Activated CD4-positive, alpha-beta T cell treated with anti-CD3 and anti-CD28 coated beads, Interleukin-2, amount 10 ng/mL, durations not matched to agents 24 days and 14 days (primary cell): ENCODE measurements at regions of chr9 and their contacts with region 1.

Region 1: GRCh38 chr9:37144762-37145161 is 24.4 kb downstream of the ZCCHC7 start:
- DNase-seq: no peak
- H3K4me3 Mint-ChIP-seq: no peak overlapping the region
- H3K27ac Mint-ChIP-seq: no peak overlapping the region
- H3K4me1 Mint-ChIP-seq: peaks cover 23% of the 10 kb centered on the region
- H3K27me3 Mint-ChIP-seq: no peaks in the 10 kb centered on the region

Region 2: DNA sequence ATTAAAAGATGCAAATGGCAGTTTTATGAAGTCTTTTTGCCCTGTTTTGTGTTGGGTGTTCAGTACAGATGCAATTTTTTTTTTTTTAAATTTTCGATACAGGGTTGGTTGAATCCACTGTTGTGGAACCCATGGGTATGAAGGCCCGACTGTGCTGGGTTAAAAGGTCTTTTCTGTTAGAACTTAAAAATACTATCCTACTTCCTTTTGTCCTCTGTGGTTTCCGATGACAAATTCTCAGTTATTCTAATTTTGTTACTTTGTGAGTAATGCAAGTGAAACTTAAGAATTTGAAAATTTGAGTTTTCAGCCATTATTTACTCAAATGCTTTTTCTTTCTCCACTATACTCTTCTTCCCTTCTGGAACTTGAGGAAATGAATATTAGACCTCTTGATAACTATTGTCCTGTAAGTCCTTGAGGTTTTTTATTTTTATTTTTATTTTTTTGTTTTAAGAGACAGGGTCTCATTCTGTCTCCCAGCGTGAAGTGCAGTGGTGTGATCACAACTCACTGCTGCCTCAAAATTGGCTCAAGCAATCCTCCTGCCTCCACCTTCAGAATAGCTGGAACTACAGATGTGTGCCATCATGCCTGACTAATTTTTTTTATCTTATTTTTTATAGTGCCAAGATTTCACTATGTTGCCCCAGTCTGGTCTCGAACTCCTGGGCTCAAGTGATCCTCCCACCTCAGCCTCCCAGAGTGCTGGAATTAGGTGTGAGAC is 43.1 kb after region 1 on chr9:
- intact Hi-C with region 1: loop called (anchors 5 kb)
- DNase-seq: no peak
- H3K4me3 Mint-ChIP-seq: peak overlapping the region; percentile 82
- H3K27ac Mint-ChIP-seq: peak overlapping the region; percentile 90
- H3K4me1 Mint-ChIP-seq: peaks cover 22% of the 10 kb centered on the region
- H3K27me3 Mint-ChIP-seq: no peaks in the 10 kb centered on the region

Region 3: DNA sequence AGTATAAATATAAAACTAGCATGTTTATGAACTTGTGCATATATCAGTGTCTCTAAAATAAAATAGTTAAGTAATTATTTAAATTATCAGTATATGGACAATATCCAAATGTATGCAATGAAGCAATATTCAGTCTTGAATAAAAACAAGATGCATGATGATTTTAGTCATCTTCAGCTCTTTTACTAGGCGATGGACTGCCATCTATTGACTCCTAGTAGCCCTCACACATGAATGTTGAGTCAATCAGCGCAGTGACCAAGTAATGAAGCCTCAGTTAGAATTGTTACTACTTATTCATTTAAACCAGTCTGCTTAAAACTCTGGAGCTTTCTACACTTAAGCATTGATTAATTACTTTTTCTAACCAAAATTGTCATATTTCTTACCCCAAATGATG is 184.8 kb after region 1 on chr9:
- intact Hi-C with region 1: loop called (anchors 10 kb)
- DNase-seq: peak; percentile 62
- H3K4me3 Mint-ChIP-seq: no peak overlapping the region
- H3K27ac Mint-ChIP-seq: no peak overlapping the region
- H3K4me1 Mint-ChIP-seq: no peaks in the 10 kb centered on the region
- H3K27me3 Mint-ChIP-seq: no peaks in the 10 kb centered on the region